ENCODE measurements at regions of chr1 and their contacts with region 1.

Region 1: DNA sequence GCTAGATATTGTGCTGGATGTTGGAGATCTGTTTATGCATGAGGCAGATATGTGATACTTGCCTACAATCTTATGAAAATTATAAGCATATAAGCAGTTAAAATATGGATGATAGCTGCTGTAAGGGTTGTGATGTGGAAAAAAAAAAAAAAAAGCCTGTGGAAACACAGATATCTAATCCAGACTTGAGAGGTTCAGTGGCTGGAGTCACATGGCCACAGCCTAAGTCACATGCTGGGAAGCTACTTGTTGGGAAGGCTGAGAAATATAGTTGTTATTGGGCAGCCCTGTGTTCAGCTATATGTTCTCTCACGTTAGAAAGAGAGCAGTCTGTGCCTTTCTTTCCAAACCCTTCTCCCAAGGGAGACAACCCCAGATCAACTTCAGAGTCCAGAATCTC is 15.1 kb downstream of the RAVER2 start:
- DNase-seq: no peak
- H3K4me3 ChIP-seq: no peak overlapping the region
- H3K27ac ChIP-seq: no peak overlapping the region
- H3K4me1 ChIP-seq: no peaks in the 10 kb centered on the region
- H3K27me3 ChIP-seq: no peaks in the 10 kb centered on the region
- CTCF ChIP-seq: no peak
- POLR2A ChIP-seq: no peak

Region 2: DNA sequence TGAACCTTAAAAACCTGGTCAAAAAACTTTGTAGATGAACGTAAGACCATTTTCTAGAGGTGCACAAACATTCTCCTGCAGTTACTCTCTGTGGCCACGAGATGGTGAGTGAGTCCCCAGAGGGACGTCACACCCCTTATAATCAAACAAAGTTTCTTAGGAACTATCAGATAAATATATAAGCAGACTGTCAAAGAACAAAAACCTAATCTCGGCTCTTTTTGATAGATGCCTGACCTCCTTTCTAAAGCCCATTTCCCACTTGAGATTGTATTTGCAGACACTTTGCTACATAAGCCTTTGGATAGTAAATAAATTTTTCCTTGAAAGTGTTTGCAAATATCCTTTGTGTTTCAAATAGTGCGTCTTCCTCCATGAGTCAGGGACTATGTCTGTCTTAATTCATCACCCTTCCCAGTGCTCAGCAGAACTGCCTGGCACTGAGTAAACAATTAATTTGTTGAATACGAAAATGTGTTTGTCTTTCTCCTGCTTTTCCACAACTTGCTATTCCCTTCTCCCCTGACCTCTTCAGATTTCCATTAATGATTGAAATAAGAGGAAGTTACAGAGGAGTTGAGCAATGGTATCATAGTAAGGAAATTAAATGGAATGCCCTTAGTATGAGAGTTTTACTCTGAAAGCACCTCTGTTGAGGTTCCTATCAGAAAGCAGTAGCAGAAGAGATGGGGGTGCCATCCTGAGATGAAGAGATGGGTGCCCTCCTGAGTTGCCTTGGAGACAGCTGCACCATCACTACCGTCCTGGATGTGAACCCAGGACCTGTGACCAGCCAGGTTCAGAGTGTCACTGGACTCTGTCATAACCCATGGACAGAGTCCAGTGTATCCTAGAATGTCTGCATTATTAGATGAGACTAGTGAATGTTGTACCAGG is 72.9 kb before region 1 on chr1:
- intact Hi-C with region 1: no loop called
- DNase-seq: peak; percentile 27 to 64 (median 46)
- H3K4me3 ChIP-seq: no peak overlapping the region
- H3K27ac ChIP-seq: peak overlapping the region in 1 of 5 donors; percentile 50
- H3K4me1 ChIP-seq: peaks cover 0 to 14% of the 10 kb centered on the region in 2 donors
- H3K27me3 ChIP-seq: no peaks in the 10 kb centered on the region
- CTCF ChIP-seq: peak; percentile 77 to 90 (median 85)
- POLR2A ChIP-seq: no peak

Region 3: GRCh38 chr1:64790832-64791487 is 31.0 kb after region 1 on chr1:
- intact Hi-C with region 1: no loop called
- DNase-seq: no peak
- H3K4me3 ChIP-seq: no peak overlapping the region
- H3K27ac ChIP-seq: no peak overlapping the region
- H3K4me1 ChIP-seq: no peaks in the 10 kb centered on the region
- H3K27me3 ChIP-seq: no peaks in the 10 kb centered on the region
- CTCF ChIP-seq: no peak
- POLR2A ChIP-seq: no peak

Region 4: GRCh38 chr1:64809309-64809708 is 49.3 kb after region 1 on chr1:
- intact Hi-C with region 1: loop called in 1 of 2 experiments (anchors 5 kb)
- DNase-seq: no peak
- H3K4me3 ChIP-seq: no peak overlapping the region
- H3K27ac ChIP-seq: no peak overlapping the region
- H3K4me1 ChIP-seq: no peaks in the 10 kb centered on the region
- H3K27me3 ChIP-seq: no peaks in the 10 kb centered on the region
- CTCF ChIP-seq: no peak
- POLR2A ChIP-seq: no peak

Region 5: GRCh38 chr1:64834734-64835133 is 74.8 kb after region 1 on chr1:
- intact Hi-C with region 1: no loop called
- DNase-seq: peak in 2 of 7 donors; percentile 22 to 54
- H3K4me3 ChIP-seq: no peak overlapping the region
- H3K27ac ChIP-seq: peak overlapping the region in 1 of 5 donors; percentile 9
- H3K4me1 ChIP-seq: no peaks in the 10 kb centered on the region
- H3K27me3 ChIP-seq: no peaks in the 10 kb centered on the region
- CTCF ChIP-seq: no peak
- POLR2A ChIP-seq: no peak

Region 6: DNA sequence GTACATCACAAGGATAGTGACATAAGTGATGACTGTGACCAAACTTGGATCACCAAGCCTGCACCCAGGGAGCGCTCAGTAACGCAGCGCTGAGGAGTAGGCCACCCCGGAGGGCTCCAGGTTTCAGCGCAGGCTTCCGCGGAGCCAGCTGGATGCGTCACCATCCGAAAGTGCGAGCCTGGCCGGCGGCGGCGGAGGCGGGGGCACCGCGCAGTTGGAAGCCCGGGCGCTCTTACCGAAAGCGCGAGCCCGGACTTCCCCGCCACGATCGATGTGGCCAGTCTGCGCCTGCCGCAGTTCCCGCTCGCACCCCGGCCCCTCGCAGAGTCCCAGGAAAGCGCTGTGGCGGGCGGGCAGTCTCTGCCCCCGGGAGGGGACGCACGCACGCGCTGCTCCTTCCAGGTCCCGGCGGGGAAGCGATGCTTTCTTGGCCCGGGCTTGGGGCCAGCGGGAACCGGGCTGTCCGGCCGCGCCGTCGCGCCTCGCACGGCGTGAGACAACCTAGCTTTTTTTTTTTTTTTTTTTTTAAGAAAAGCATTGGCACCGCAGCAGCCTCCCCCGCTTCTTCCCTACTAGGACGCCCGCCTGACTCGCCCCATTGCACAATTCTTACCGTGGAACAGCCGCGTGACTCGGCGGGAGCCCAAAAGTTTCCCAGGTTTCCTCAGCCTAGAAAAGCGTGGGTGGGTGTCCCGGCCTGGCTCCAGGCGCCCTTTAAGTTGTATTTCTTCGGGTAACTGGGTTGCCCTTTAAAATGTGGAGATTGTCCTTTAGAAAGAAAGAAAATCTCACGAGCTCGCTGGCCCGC is 242.7 kb after region 1 on chr1:
- intact Hi-C with region 1: no loop called
- DNase-seq: peak; percentile 78 to 93 (median 91)
- H3K4me3 ChIP-seq: peak overlapping the region in 2 of 4 donors; percentile 33 to 66
- H3K27ac ChIP-seq: peak overlapping the region; percentile 61 to 98 (median 86)
- H3K4me1 ChIP-seq: peaks cover 13 to 20% of the 10 kb centered on the region in 2 donors
- H3K27me3 ChIP-seq: no peaks in the 10 kb centered on the region
- CTCF ChIP-seq: peak in 1 of 6 experiments; percentile 7
- POLR2A ChIP-seq: peak; percentile 57 to 68